Natural killer cell (primary cell): ENCODE measurements at regions of chr10 and their contacts with region 1.

Region 1: DNA sequence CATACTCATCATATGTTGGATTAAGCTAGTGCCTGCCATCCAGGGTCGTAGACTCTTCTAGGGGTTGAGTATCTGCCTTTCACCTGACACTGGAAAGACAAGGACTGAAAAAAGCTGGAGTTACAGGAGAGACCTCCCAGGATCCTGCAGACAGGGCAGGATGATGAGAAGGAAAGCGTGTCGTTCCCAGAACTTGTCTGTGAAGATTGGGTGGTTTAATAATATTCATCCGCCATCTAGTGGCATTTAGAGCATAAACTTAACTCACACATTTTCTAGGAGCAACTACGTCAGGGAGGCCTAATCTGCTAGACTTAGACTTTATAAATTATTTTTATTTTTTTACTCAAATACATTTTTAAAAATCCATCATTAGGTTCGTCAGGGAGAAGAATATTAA is 59.6 kb downstream of the ADRB1 start:
- DNase-seq: peak in 1 of 2 donors; percentile 65
- ATAC-seq: peak in 2 of 3 donors; percentile 52 to 59
- H3K4me3 ChIP-seq: no peak overlapping the region
- H3K4me3 Mint-ChIP-seq: no peak overlapping the region
- H3K27ac ChIP-seq: no peak overlapping the region
- H3K27ac Mint-ChIP-seq: no peak overlapping the region
- H3K4me1 ChIP-seq: peaks cover 25% of the 10 kb centered on the region
- H3K4me1 Mint-ChIP-seq: peaks cover 30 to 40% of the 10 kb centered on the region in 2 donors
- H3K27me3 ChIP-seq: peaks cover 13% of the 10 kb centered on the region
- H3K27me3 Mint-ChIP-seq: peaks cover 18 to 25% of the 10 kb centered on the region in 2 donors
- CTCF ChIP-seq: peak; percentile 53

Region 2: DNA sequence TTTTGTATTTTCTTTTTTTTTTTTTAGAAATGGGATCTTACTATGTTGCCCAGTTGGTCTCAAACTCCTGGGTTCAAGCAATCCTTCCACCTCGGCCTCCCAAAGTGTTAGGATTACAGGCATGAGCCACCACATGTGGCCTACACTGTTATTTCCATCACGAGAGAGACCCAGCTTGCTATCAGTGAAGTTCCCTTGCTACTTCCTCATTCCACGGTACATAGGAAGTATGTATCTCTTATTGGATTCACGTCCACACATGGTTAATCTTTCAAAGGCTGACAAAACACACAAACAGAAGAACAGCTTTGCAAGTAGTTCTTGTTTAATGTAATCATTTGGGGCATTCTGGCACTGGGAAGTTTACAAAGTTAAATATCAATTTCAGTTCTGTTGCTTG is 300.3 kb before region 1 on chr10:
- intact Hi-C with region 1: loop called (anchors 1 kb)
- DNase-seq: no peak
- ATAC-seq: no peak
- H3K4me3 ChIP-seq: no peak overlapping the region
- H3K4me3 Mint-ChIP-seq: no peak overlapping the region
- H3K27ac ChIP-seq: no peak overlapping the region
- H3K27ac Mint-ChIP-seq: no peak overlapping the region
- H3K4me1 ChIP-seq: no peaks in the 10 kb centered on the region
- H3K4me1 Mint-ChIP-seq: no peaks in the 10 kb centered on the region
- H3K27me3 ChIP-seq: peaks cover 3% of the 10 kb centered on the region
- H3K27me3 Mint-ChIP-seq: peaks cover 9 to 38% of the 10 kb centered on the region in 2 donors
- CTCF ChIP-seq: no peak

Region 3: DNA sequence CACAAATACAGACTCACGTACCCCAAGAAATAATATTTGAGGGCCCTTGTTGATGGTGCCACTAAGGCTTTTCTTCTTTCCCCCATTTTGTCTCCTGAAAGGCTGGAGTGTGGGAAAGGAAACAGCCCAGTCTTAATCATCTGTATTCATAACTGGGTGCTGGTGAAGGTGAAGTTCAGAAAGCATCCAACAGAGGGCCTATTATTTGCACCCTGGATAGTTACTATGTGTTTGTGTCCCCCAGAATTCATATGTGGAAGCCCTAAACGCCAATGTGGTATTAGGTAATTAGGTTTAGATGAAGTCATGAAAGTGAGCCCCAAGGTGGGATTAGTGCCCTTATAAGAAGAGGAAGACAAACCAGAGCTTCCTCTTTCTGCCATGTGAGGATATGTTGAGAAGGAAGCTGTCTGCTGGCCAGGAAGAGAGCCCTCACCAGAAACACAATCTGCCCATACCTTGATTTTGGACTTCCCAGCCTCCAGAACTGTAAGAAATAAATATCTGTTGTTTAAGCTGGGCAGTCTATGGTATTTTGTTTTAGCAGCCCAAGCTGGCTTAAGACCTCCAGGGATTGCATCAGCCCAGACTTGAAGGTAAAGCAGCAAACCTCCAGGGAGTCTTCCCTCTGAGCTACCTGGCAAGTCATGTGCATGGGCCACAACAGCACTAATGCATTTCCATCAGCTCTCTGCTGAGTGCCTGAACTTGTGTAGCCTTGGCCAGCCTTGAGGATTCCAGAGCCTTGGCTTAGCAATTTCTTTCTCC is 149.6 kb before region 1 on chr10:
- intact Hi-C with region 1: loop called (anchors 1 kb)
- DNase-seq: peak in 1 of 2 donors; percentile 32
- ATAC-seq: peak in 1 of 3 donors; percentile 44
- H3K4me3 ChIP-seq: no peak overlapping the region
- H3K4me3 Mint-ChIP-seq: no peak overlapping the region
- H3K27ac ChIP-seq: no peak overlapping the region
- H3K27ac Mint-ChIP-seq: no peak overlapping the region
- H3K4me1 ChIP-seq: no peaks in the 10 kb centered on the region
- H3K4me1 Mint-ChIP-seq: no peaks in the 10 kb centered on the region
- H3K27me3 ChIP-seq: no peaks in the 10 kb centered on the region
- H3K27me3 Mint-ChIP-seq: peaks cover 0 to 2% of the 10 kb centered on the region in 2 donors
- CTCF ChIP-seq: peak; percentile 24

Region 4: DNA sequence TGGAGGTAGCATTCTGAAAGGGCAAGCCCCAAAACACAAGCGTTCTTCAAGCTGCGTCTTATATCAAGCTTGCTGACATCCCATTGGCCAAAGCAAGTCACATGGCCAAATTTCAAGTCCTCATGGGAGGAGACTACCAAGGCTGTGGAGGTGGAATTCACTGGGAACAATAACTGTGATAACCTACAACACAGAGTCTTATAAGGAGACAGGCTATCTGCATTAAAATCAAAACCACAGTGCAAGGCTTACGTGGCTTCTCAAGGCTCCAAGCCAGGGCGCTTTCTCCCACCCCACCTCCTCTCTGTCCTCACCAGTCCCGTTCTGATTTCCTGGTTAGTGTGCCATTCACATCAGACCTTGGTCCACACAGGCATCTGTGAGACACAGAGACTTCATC is 20.2 kb before region 1 on chr10:
- intact Hi-C with region 1: no loop called
- DNase-seq: peak in 1 of 2 donors; percentile 9
- ATAC-seq: peak; percentile 18 to 47 (median 35)
- H3K4me3 ChIP-seq: no peak overlapping the region
- H3K4me3 Mint-ChIP-seq: no peak overlapping the region
- H3K27ac ChIP-seq: no peak overlapping the region
- H3K27ac Mint-ChIP-seq: no peak overlapping the region
- H3K4me1 ChIP-seq: peaks cover under 1% of the 10 kb centered on the region
- H3K4me1 Mint-ChIP-seq: peaks cover 9 to 10% of the 10 kb centered on the region in 2 donors
- H3K27me3 ChIP-seq: no peaks in the 10 kb centered on the region
- H3K27me3 Mint-ChIP-seq: no peaks in the 10 kb centered on the region
- CTCF ChIP-seq: no peak

Region 5: DNA sequence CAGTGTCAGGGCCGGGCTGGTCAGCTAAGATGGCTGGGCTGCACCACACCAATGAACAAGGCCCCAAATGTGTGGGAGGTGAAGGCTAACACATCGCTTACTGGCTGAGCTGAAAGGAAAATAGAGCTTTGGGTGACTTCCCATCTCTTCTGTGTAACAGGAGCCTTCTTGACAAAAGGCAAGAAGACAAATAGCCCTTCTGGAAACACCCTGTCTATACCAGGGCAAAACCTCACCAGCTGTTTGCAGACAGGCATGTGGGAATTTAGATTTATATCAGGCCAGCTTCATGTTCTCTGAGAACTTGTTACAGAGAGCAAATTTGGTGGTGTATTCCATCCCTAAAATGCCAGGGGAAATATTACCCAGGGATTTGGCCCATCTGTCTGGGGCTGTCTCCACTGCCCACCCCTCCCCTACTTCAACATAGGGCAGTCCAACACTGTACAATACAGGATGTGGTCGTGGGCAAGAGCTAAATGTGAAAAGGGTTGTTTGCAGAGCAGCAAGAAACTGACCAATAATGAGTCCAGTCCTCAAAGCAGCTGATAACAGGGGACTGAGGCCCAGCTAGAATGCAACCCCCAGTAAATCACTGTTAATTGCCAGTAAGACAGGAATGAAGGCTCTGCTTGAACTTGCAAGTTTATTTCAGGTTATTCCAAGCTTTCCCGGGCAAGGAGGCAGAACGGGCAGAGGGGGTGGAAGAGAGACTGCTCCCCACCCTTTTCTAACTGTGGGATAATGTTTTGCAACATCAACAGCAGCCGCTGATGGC is 263.9 kb after region 1 on chr10:
- intact Hi-C with region 1: no loop called
- DNase-seq: no peak
- ATAC-seq: peak in 2 of 3 donors; percentile 47 to 52
- H3K4me3 ChIP-seq: no peak overlapping the region
- H3K4me3 Mint-ChIP-seq: no peak overlapping the region
- H3K27ac ChIP-seq: peak overlapping the region; percentile 12
- H3K27ac Mint-ChIP-seq: no peak overlapping the region
- H3K4me1 ChIP-seq: peaks cover 15% of the 10 kb centered on the region
- H3K4me1 Mint-ChIP-seq: peaks cover 16 to 17% of the 10 kb centered on the region in 2 donors
- H3K27me3 ChIP-seq: no peaks in the 10 kb centered on the region
- H3K27me3 Mint-ChIP-seq: peaks cover 2% of the 10 kb centered on the region in 2 donors
- CTCF ChIP-seq: no peak